Left ventricle myocardium inferior (tissue), 1 donor: ENCODE measurements at regions of chr1 and their contacts with region 1.

Region 1: DNA sequence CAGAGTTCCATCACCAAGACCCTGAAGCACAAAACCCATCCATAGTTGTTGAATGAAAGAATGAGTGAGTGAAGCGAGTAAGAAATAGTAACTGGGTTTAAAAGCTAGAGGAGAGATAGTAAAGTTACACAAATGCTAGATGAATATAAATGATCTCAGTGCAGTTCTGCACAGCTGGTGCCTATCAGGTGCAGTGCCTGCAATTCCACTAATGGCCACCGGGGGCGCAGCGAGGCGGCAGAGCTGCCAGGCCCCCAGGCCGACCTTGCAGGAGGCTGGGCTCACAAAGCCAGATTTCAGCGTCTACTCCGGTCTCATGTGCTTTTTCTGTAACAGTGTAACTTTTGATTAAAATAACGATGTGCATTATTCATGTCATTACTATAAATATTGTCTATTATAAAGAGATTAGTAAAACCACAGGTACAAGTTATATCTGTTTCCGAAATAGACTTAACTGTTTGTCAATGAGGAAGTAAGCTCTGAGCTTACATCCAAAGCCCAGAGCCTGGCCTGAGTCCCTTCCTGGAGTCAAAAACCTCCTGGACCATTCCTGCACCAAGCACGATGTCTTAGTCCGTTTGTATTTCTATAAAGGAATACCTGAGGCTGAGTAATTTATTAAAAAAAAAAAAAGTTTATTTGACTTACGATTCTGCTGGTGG is 477.6 kb downstream of the NPHP4 start:
- DNase-seq: peak; percentile 65
- H3K4me3 ChIP-seq: no peak overlapping the region
- H3K27ac ChIP-seq: no peak overlapping the region
- H3K4me1 ChIP-seq: no peaks in the 10 kb centered on the region
- H3K27me3 ChIP-seq: peaks cover 74% of the 10 kb centered on the region
- CTCF ChIP-seq: peak; percentile 100

Region 2: GRCh38 chr1:5745776-5746610 is 231.3 kb after region 1 on chr1:
- intact Hi-C with region 1: loop called (anchors 10 kb)
- DNase-seq: peak; percentile 53
- H3K4me3 ChIP-seq: no peak overlapping the region
- H3K27ac ChIP-seq: no peak overlapping the region
- H3K4me1 ChIP-seq: no peaks in the 10 kb centered on the region
- H3K27me3 ChIP-seq: peaks cover 92% of the 10 kb centered on the region
- CTCF ChIP-seq: peak; percentile 93

Region 3: GRCh38 chr1:5915587-5916571 is 401.2 kb after region 1 on chr1:
- intact Hi-C with region 1: loop called (anchors 10 kb)
- DNase-seq: no peak
- H3K4me3 ChIP-seq: no peak overlapping the region
- H3K27ac ChIP-seq: no peak overlapping the region
- H3K4me1 ChIP-seq: no peaks in the 10 kb centered on the region
- H3K27me3 ChIP-seq: no peaks in the 10 kb centered on the region
- CTCF ChIP-seq: peak; percentile 72

Region 4: DNA sequence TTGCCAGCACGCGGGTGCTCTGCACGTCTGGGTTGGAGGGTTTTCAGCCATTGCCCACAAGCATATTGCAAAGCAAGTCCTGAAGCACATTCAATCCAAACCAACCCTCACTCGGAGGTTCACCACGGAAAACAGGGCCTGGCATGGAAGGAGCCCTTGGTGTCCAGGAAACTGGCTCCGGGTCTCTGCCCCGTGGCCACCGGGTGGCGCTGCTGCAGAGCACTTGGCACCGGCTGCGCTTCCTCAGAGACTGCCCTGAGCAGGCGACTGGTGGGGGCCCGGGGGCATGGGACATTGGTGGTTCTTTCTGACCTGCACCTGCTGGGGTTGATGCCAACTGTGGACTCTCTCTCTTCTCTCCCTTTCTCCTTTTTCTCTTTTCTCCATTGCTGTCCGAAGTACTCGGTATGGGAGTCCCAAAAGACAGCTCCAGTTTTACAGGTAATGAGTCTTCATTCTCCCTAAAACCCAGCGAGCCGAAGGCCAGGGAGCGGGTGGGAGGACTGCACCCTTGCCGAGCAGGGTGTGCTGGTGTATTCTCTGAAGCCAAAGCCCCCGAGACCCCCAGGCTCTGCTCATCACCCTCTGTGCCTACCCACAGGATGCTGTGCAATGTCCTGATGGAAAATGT is 526.9 kb after region 1 on chr1:
- intact Hi-C with region 1: no loop called
- DNase-seq: no peak
- H3K4me3 ChIP-seq: no peak overlapping the region
- H3K27ac ChIP-seq: no peak overlapping the region
- H3K4me1 ChIP-seq: peaks cover 4% of the 10 kb centered on the region
- H3K27me3 ChIP-seq: no peaks in the 10 kb centered on the region
- CTCF ChIP-seq: peak; percentile 58